ENCODE measurements at regions of chr6 and their contacts with region 1.

Region 1: DNA sequence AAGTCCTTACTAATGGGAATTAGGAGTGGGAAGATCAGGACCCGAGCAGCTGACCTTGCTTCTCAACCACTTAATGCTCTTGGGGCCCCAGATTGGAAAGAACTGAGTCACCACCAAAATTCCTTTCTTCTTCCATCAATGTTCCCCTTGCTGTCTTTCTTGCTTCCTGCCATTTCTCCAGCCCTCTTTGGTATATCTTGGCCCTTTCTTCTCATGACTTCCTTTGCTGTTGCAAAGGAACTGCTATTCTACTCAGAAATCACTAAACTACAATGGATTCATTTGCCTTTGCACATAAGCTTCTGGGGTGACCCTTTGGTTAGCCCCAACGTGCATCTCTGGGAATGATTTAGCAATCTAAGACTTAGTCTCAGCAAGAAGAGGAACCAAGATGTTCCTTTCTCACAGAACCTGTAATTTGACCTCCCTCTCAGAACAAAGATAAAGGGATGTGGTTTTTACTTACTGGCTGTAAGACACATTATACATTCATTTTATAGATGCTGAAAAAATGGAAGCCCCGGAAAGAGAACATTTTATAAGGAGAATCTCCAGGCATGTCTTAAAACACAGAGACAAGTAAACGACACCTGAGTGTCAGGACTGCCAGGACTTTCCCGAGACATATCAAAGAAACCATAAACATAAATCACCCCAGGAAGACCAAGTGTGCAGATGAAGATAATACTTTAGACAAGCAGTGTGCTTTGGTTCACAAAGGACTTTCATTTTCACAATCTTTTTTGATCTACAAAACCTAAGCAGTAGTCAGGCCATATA is 99.0 kb upstream of the TNFAIP3 start:
- DNase-seq: peak; percentile 73
- H3K4me3 Mint-ChIP-seq: peak overlapping the region; percentile 47
- H3K27ac Mint-ChIP-seq: peak overlapping the region; percentile 87
- H3K4me1 Mint-ChIP-seq: peaks cover 24% of the 10 kb centered on the region
- H3K27me3 Mint-ChIP-seq: no peaks in the 10 kb centered on the region

Region 2: DNA sequence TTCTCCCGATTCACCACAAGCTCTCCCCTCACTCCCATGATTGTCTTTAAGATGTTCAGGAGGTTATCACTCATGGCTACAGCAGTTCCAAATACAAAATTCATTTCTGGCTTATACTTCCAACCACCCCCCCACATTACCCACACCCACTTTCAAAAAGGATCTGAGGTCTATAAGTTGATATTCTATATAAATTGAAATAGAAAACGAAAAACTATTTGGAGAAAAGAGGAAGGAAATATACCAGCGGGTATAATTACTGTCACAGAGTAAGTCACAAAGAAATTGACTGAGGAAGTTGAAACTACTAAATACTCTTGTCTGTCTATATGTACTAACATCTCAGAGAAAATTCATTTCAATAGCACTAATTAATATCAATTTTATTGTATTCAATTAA is 13.7 kb before region 1 on chr6:
- intact Hi-C with region 1: loop called (anchors 2 kb)
- DNase-seq: no peak
- H3K4me3 Mint-ChIP-seq: no peak overlapping the region
- H3K27ac Mint-ChIP-seq: no peak overlapping the region
- H3K4me1 Mint-ChIP-seq: peaks cover 21% of the 10 kb centered on the region
- H3K27me3 Mint-ChIP-seq: peaks cover 2% of the 10 kb centered on the region